GM23248 (cell line): ENCODE measurements at regions of chr15 and their contacts with region 1.

Region 1: DNA sequence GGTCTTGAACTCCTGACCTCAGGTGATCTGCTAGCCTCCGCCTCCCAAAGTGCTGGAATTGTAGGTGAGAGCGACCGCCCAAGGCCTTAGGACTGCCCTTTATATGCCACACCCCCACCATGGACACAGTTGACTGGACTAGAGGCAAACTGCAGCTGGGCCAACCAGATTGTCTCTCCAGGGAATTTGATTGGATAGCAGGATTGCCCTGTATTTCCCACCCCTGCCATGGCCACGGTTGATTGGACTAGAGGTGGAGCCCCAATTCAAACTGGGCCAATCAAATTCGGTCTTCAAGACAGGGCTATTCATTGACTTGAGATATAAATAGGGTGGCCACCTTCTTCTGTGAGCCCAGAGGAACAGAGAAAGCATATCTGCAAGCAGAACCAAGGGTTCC is 6.9 kb upstream of the CLPX start:
- DNase-seq: peak; percentile 24
- H3K4me3 ChIP-seq: no peak overlapping the region
- H3K27ac ChIP-seq: no peak overlapping the region
- H3K4me1 ChIP-seq: no peaks in the 10 kb centered on the region
- H3K27me3 ChIP-seq: peaks cover 6% of the 10 kb centered on the region; the same call in 1 of the 2 replicates

Region 2: GRCh38 chr15:64566629-64567427 is 625.2 kb before region 1 on chr15:
- in situ Hi-C with region 1: no loop called
- DNase-seq: no peak
- H3K4me3 ChIP-seq: no peak overlapping the region
- H3K27ac ChIP-seq: no peak overlapping the region
- H3K4me1 ChIP-seq: no peaks in the 10 kb centered on the region
- H3K27me3 ChIP-seq: no peaks in the 10 kb centered on the region

Region 3: GRCh38 chr15:65264863-65265430 is 72.9 kb after region 1 on chr15:
- in situ Hi-C with region 1: loop called (anchors 10 kb)
- DNase-seq: no peak
- H3K4me3 ChIP-seq: no peak overlapping the region
- H3K27ac ChIP-seq: no peak overlapping the region
- H3K4me1 ChIP-seq: no peaks in the 10 kb centered on the region
- H3K27me3 ChIP-seq: no peaks in the 10 kb centered on the region